Heart right ventricle (tissue), 16 donors: ENCODE measurements at regions of chr18 and their contacts with region 1.

Region 1: GRCh38 chr18:78999937-79000336 is 20.3 kb downstream of the SALL3 start:
- DNase-seq: no peak
- ATAC-seq: no peak
- H3K4me3 ChIP-seq: no peak overlapping the region
- H3K27ac ChIP-seq: no peak overlapping the region
- H3K4me1 ChIP-seq: no peaks in the 10 kb centered on the region
- H3K27me3 ChIP-seq: peaks cover 0 to 46% (median 17%) of the 10 kb centered on the region in 7 donors
- CTCF ChIP-seq: no peak

Region 2: GRCh38 chr18:78939105-78939504 is 60.8 kb before region 1 on chr18:
- intact Hi-C with region 1: loop called in 1 of 10 experiments (anchors 10 kb)
- DNase-seq: no peak
- ATAC-seq: no peak
- H3K4me3 ChIP-seq: no peak overlapping the region
- H3K27ac ChIP-seq: no peak overlapping the region
- H3K4me1 ChIP-seq: no peaks in the 10 kb centered on the region
- H3K27me3 ChIP-seq: peaks cover 0 to 13% (median 3%) of the 10 kb centered on the region in 7 donors
- CTCF ChIP-seq: no peak

Region 3: DNA sequence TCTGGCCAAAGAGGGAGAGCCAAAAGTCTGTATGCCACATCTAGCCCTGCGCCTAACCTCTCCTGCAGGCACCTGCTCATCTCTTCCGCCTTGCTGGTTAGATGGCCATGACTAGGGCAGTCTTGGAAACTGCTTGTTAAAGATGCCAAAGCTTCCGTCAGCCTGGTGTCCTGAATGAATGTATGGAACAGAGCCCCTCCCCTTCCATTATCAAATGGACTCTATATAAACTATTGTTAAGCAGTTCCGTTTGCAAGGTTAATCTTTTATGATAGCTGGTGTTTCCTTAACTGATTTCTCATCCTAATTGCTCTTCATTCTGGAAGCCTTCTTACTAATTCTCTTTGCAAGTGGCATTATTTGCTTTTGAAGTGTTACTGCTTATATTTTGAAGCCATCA is 156.4 kb after region 1 on chr18:
- intact Hi-C with region 1: no loop called
- DNase-seq: no peak
- ATAC-seq: no peak
- H3K4me3 ChIP-seq: no peak overlapping the region
- H3K27ac ChIP-seq: peak overlapping the region in 1 of 10 donors; percentile 12
- H3K4me1 ChIP-seq: peaks cover 0 to 9% (median 0%) of the 10 kb centered on the region in 9 donors
- H3K27me3 ChIP-seq: no peaks in the 10 kb centered on the region
- CTCF ChIP-seq: no peak